ENCODE measurements at regions of chr3 and their contacts with region 1.

Region 1: GRCh38 chr3:71130471-71131374 is 452.8 kb downstream of the FOXP1 start:
- DNase-seq: peak; percentile 48 to 49
- ATAC-seq: peak; percentile 77 to 83
- H3K4me3 ChIP-seq: peak overlapping the region; percentile 49 to 69 (median 58)
- H3K27ac ChIP-seq: peak overlapping the region; percentile 61 to 78 (median 71)
- H3K4me1 ChIP-seq: peaks cover 52 to 55% of the 10 kb centered on the region in 2 donors
- H3K27me3 ChIP-seq: no peaks in the 10 kb centered on the region
- CTCF ChIP-seq: no peak
- POLR2A ChIP-seq: peak; percentile 15 to 34

Region 2: GRCh38 chr3:70973558-70973957 is 157.2 kb before region 1 on chr3:
- in situ Hi-C with region 1: no loop called
- intact Hi-C with region 1: no loop called
- DNase-seq: no peak
- ATAC-seq: no peak
- H3K4me3 ChIP-seq: no peak overlapping the region
- H3K27ac ChIP-seq: no peak overlapping the region
- H3K4me1 ChIP-seq: no peaks in the 10 kb centered on the region
- H3K27me3 ChIP-seq: no peaks in the 10 kb centered on the region
- CTCF ChIP-seq: no peak
- POLR2A ChIP-seq: no peak

Region 3: GRCh38 chr3:71069797-71070196 is 60.9 kb before region 1 on chr3:
- in situ Hi-C with region 1: no loop called
- intact Hi-C with region 1: loop called (anchors 5 kb)
- DNase-seq: peak; percentile 15 to 35
- ATAC-seq: no peak
- H3K4me3 ChIP-seq: no peak overlapping the region
- H3K27ac ChIP-seq: no peak overlapping the region
- H3K4me1 ChIP-seq: peaks cover 20 to 26% of the 10 kb centered on the region in 2 donors
- H3K27me3 ChIP-seq: no peaks in the 10 kb centered on the region
- CTCF ChIP-seq: peak in 4 of 5 experiments; percentile 27 to 46 (median 32)
- POLR2A ChIP-seq: no peak

Region 4: DNA sequence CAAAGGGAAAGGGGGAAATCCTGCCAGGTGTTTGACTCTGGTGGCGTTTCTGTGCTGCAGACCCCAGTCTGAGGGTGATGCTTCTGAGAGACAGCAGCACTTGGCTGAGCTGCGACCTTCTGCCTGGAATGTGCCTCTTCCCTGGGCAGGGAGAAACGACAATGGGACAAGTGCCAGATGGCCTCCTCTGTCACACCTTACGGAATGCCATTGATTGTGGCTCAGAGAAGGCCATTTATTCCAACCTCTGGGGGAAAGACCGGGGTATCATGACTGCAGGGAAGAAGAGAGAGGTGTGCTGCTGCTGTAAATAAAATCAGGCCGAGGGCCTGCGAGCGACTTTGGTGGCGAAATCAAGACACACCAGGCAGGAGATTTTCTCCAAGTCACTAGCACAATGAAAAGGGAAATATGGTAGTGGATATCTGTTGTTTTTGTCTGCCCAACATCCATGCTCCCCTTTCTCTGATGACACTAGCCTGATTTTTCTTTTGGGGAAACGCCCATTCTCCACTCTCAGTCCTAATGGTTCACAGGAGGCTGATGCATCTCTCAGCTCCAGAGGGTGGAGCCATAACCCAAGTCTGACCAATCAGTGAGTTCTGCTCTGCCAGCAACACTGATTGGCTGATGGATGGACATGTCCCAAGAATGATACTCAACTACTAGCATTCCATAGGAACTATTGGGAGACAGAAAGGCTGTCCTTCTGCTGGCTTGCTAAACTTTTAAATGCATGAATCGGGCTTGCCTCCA is 116.7 kb after region 1 on chr3:
- in situ Hi-C with region 1: no loop called
- intact Hi-C with region 1: no loop called
- DNase-seq: no peak
- ATAC-seq: no peak
- H3K4me3 ChIP-seq: no peak overlapping the region
- H3K27ac ChIP-seq: no peak overlapping the region
- H3K4me1 ChIP-seq: peaks cover 11 to 13% of the 10 kb centered on the region in 2 donors
- H3K27me3 ChIP-seq: no peaks in the 10 kb centered on the region
- CTCF ChIP-seq: no peak
- POLR2A ChIP-seq: no peak

Measured in gastrocnemius medialis (tissue), 4 donors.